Activated CD4-positive, alpha-beta T cell treated with anti-CD3 and anti-CD28 coated beads, Interleukin-2, amount 10 ng/mL, durations not matched to agents 24 days and 14 days (primary cell): ENCODE measurements at regions of chr17 and their contacts with region 1.

Region 1: DNA sequence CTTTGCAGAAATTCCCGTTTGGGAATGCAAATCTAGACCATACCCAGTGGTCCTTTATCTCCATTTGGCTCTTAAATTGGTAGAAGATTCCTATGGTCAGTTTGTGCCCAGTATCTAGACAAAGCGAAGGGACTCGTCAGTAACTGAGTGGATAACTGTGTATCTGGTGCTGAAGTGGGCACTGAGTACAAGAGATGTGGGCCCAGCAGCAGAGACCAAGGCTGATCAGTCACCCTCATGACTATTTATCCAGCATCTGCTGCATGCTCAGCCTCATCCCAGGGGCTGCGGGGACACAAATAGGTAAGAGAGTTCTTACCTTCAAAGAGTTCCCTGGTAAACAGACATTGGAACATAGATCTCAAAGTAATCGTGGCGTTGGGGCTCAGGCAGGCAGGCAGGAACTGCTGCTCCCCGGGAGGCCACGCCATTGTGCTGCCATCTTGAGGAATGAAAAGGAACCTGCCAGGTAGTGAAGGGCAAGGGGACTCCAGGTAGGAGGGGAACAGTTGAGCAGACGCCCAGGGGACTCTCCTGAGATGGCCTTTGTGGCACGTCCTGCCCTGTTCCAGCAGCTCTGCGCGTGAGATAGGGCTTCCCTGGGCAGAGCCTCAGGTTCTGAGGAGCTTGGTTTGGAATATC is 10.3 kb downstream of the NT5M start:
- DNase-seq: peak; percentile 92
- H3K4me3 Mint-ChIP-seq: no peak overlapping the region
- H3K27ac Mint-ChIP-seq: no peak overlapping the region
- H3K4me1 Mint-ChIP-seq: peaks cover 6% of the 10 kb centered on the region
- H3K27me3 Mint-ChIP-seq: no peaks in the 10 kb centered on the region

Region 2: DNA sequence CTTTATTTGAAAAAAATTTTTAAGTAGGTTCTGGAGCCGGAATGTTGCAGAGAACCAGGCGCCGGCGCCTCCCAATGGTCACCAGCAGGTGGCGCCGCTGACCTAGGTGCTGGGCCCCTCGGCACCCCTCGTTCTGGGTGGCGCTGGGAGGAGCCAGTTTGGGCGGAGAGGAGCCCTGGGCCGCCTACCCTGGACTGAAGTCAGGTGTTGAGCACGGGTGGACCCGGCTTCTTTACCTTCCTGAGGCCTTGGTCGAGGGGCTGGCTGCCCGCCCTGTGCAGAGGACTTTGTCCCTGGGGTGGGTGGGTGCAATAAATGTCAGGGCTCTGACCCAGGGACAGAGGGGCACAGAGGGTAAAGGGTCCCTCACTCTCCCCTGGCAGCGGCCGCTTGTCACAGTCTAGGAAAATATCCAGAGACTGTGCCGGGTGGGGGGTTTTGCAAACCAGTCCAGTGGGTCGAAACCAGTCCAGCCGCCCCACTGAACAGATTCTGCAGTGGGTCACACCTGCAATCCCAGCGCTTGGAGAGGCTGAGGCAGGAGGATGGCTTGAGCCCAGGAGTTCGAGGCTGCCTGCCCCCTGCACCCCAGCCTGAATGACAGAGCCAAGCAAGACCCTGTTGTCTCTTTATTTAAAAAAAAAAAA is 311.5 kb before region 1 on chr17:
- intact Hi-C with region 1: loop called (anchors 2 kb)
- DNase-seq: peak; percentile 94
- H3K4me3 Mint-ChIP-seq: no peak overlapping the region
- H3K27ac Mint-ChIP-seq: no peak overlapping the region
- H3K4me1 Mint-ChIP-seq: no peaks in the 10 kb centered on the region
- H3K27me3 Mint-ChIP-seq: peaks cover 2% of the 10 kb centered on the region

Region 3: DNA sequence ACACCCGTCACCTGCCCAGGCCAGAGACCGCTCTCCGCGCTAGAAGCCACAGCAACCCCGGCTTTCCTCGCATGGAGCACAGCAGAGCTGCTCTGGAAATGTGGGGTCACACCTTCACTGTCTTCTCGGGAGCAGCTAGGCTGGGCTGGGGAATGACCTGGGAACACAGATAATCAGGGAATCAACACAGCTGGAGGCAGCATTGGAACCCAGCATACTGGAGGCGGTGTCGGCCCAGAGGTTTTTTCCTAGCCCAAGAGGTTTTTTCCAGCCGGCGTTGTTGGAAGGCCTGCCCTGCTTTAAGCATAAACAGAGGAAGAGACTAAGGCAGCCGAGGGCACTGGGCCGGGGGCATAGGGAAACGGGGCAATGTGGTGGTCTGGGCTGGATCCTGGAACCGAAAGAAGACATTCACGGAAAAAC is 106.5 kb before region 1 on chr17:
- intact Hi-C with region 1: no loop called
- DNase-seq: no peak
- H3K4me3 Mint-ChIP-seq: peak overlapping the region; percentile 60
- H3K27ac Mint-ChIP-seq: peak overlapping the region; percentile 42
- H3K4me1 Mint-ChIP-seq: peaks cover 11% of the 10 kb centered on the region
- H3K27me3 Mint-ChIP-seq: no peaks in the 10 kb centered on the region

Region 4: DNA sequence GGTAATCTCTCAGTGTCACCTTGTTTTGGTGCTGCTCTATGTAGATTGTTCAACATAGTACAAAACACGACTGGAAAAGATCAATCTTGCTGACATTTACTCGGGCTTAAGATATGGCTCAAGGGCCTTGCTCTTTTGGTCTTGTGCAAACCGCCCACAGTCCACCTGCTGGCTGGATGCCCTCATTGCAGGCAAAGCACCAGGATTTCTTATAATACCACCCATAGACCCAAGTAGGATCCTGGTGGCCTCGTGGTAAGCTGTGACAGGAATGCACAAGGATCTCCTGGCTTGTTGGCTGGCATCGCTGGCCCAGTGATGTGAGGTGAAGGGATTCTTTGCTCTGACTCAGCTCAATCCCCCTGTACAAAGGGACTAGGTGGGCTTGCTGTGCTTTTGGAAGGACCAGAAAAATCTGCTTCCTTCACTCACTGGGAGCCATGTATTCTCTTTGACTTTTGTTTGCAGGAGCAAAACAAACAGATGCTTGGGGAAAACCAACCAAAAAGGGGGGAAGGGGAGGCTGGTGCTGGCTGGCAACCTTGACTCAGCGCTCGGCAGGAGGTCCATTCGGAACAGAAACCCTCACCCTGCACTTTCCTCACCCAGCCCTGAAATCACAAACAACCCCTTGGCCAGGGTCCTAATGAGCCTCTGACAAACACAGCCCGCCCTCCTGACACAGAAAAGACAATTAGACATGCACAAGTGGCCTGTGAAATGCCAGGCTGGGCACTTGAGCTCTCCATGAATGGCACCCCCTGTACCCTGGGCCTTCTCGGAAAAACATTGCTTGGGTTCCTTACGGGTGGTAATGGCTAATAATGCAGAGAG is 126.8 kb after region 1 on chr17:
- intact Hi-C with region 1: no loop called
- DNase-seq: peak; percentile 91
- H3K4me3 Mint-ChIP-seq: no peak overlapping the region
- H3K27ac Mint-ChIP-seq: no peak overlapping the region
- H3K4me1 Mint-ChIP-seq: no peaks in the 10 kb centered on the region
- H3K27me3 Mint-ChIP-seq: peaks cover 1% of the 10 kb centered on the region